Panc1 (cell line): ENCODE measurements at regions of chr4 and their contacts with region 1.

Region 1: DNA sequence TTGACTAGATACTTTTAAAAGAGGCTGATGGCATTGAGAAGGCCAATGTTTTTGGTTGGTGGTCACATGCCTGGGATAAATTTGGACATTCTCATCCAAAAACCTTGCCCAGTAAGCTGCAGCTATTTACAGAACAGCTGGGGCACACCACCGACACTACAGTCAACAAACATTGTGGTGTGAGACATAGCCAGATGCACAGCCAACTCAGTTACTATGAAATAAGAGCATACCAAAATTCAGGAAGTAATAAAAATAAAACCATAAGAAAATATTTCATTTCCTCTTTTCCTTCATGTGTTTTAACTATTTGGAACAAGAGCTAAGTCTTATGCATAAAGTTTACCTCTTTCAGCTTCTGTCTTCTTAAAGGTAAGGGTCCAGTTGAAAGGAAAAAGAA is 8.8 kb downstream of the PPM1K start:
- DNase-seq: no peak
- ATAC-seq: no peak
- H3K4me3 ChIP-seq: no peak overlapping the region
- H3K27ac ChIP-seq: no peak overlapping the region
- H3K4me1 ChIP-seq: no peaks in the 10 kb centered on the region
- H3K27me3 ChIP-seq: no peaks in the 10 kb centered on the region
- CTCF ChIP-seq: no peak

Region 2: GRCh38 chr4:89218587-89218986 is 943.1 kb after region 1 on chr4:
- CTCF ChIA-PET with region 1: no interaction called
- POLR2A ChIA-PET with region 1: interaction called, 13 read pairs
- in situ Hi-C with region 1: no loop called
- intact Hi-C with region 1: no loop called
- DNase-seq: no peak
- ATAC-seq: no peak
- H3K4me3 ChIP-seq: no peak overlapping the region
- H3K27ac ChIP-seq: no peak overlapping the region
- H3K4me1 ChIP-seq: no peaks in the 10 kb centered on the region
- H3K27me3 ChIP-seq: no peaks in the 10 kb centered on the region
- CTCF ChIP-seq: no peak